ENCODE measurements at regions of chr19 and their contacts with region 1.

Region 1: GRCh38 chr19:49391581-49392399 is 3.7 kb downstream of the KASH5 start:
- DNase-seq: peak; percentile 74 to 86
- H3K4me3 ChIP-seq: no peak overlapping the region
- H3K27ac ChIP-seq: no peak overlapping the region
- H3K4me1 ChIP-seq: no peaks in the 10 kb centered on the region
- H3K27me3 ChIP-seq: no peaks in the 10 kb centered on the region
- CTCF ChIP-seq: peak; percentile 39 to 94 (median 82)
- POLR2A ChIP-seq: no peak

Region 2: DNA sequence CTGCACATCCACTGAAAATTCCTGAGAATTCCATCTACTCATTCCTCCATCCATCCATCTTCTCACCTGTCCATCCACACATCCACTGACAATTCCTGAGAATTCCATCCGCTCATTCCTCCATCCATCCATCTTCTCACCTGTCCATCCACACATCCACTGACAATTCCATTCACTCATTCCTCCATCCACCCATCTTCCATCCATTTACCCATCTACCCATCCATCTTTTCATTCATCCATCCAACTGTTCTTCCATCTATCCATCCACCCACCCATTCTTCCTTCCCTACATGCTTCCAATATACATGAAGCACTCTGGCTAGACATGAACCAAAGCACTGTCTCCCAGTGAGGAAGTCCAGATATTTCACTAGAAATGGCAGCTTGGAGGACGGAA is 218.6 kb before region 1 on chr19:
- intact Hi-C with region 1: no loop called
- DNase-seq: no peak
- H3K4me3 ChIP-seq: no peak overlapping the region
- H3K27ac ChIP-seq: no peak overlapping the region
- H3K4me1 ChIP-seq: no peaks in the 10 kb centered on the region
- H3K27me3 ChIP-seq: no peaks in the 10 kb centered on the region
- CTCF ChIP-seq: no peak
- POLR2A ChIP-seq: no peak

Region 3: DNA sequence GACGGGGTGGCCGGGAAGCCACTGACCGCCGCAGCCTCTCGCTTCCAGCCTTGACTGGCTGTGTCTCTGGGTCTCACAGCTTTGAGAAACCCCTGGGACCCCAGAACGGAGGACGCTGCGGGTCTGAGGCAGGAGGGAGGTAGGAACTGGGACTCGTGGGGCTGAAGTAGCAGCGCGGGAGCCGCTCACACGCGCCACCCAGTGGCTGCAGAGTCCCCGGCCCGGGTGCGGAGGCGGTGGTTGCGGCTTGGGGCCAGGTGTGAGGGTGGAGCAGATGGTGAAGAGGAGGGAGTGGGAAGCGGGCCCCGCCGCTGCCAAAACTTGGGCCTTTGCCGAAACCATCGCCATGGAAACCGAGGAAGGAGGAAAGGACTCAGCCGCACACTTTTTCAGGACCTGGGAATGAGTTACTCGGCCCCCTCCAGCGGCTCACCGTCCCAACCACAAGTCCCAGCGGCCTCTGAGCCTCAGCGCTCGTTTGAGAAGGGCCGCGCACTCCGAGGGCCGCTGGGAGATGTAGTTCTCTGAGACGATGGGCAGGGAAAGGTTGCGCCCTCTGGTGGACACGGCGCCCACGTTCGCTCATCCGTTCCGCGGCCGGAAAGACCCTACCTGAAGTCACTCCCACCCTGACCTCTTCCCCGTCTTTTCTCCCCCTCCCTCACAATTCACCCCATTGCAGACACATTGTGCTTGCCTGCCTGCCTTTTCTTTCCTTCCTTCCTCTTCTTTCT is 51.7 kb after region 1 on chr19:
- intact Hi-C with region 1: loop called (anchors 2 kb)
- DNase-seq: peak; percentile 97
- H3K4me3 ChIP-seq: peak overlapping the region; percentile 20 to 57 (median 51)
- H3K27ac ChIP-seq: peak overlapping the region in 2 of 3 donors; percentile 69 to 79
- H3K4me1 ChIP-seq: peaks cover 0 to 7% of the 10 kb centered on the region in 2 donors
- H3K27me3 ChIP-seq: peaks cover 6% of the 10 kb centered on the region
- CTCF ChIP-seq: peak; percentile 39 to 87 (median 79)
- POLR2A ChIP-seq: no peak

Region 4: DNA sequence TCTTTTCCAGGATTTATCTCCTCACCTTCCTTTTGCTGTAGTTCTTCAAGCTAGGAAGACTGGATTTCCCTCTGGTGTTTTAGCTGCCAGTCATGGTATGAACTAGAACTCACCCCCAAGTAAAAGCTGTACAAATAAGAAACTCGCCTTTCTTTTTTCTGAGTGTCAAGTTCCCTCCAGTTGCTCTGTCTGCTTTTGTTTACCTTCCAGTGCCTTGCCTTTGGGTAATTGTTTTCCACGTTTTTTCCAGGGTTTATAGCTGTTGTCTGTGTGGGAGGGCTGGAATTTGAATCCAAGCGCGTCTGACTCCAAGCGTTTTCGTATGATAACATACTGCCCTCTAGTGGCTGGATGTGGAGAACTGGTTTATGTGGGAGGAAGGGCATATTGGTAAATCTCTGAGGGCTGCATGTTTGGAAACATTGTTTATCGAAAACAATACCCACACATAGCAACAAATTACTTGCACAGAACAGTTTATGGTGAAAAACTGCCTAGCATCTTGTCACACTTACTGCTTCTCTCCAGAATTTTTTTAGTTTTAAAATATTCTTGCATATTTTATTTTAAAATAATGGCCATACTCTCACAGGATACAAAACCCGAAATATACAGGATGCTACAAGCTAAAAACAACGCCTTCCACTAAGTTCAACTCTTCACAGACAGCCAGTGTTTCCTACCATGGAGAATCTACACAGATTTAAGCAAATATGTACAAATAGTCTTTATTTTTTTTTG is 155.2 kb after region 1 on chr19:
- intact Hi-C with region 1: loop called (anchors 5 kb)
- DNase-seq: peak; percentile 65 to 69
- H3K4me3 ChIP-seq: no peak overlapping the region
- H3K27ac ChIP-seq: no peak overlapping the region
- H3K4me1 ChIP-seq: no peaks in the 10 kb centered on the region
- H3K27me3 ChIP-seq: no peaks in the 10 kb centered on the region
- CTCF ChIP-seq: peak; percentile 74 to 93 (median 80)
- POLR2A ChIP-seq: no peak